GM12878 (cell line): ENCODE measurements at regions of chr1 and their contacts with region 1.

Region 1: DNA sequence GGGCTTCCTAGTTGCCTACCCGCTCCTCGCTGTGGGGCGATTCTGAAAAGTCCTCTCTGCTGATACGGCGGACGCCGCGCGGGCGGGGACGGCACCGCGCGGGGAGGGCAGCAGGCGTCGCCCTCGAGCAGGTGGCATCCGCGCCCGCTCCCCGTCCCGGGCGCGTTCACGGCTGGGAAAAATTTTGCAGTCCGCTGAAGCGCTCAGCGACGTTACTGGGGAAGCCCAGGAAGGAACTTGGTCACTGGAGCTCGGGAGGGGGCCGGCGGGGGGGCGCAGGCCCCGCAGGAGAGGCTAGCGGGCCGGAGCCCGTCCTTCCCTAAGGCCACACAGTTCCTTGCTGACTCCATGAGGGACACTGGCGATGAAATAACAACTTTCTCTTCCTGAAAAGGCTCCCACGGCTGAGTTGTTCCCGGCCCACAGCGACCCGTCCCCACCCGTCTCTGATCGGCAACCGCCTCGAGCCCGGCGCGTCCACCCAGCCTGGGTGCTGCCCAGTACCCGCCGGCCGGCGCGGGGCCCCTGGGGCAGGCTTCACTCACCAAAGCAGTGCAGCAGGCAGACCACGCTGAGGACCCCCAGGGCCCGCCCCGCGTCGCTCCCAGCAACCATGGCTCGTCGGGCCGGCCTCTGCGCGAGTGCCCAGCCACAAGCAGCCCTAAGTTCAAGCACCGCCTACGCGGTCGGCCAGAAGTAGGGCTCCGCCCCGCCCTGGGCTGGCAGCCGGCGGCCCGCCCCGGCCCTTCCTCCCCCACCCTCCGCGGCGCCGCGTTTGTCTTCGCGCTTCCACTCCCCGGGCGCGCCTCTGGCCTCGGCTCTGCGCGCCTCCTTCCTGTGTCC is at the start of gene CD58:
- DNase-seq: no peak
- ATAC-seq: peak; percentile 76
- H3K4me3 ChIP-seq: peak within 1 kb of the TSS; percentile 97
- H3K27ac ChIP-seq: peak within 1 kb of the TSS; percentile 95
- H3K4me1 ChIP-seq: peaks cover 40% of the 10 kb centered on the region
- H3K27me3 ChIP-seq: no peaks in the 10 kb centered on the region
- CTCF ChIP-seq: peak; percentile 69 to 72 (median 70)
- EP300 ChIP-seq: 0 out of 4 replicates have a peak, but pooled peaks have one; percentile 12 to 27
- POLR2A ChIP-seq: peak; percentile 93
- RAD21 ChIP-seq: peak; percentile 32; the same call in 1 of the 2 replicates
- polyA plus RNA-seq, gene CD58: 110 to 125 TPM

Region 2: GRCh38 chr1:116504308-116505156 is 66.0 kb before region 1 on chr1:
- CTCF ChIA-PET with region 1: interaction called, 5 read pairs
- POLR2A ChIA-PET with region 1: interaction called, 9 read pairs
- RAD21 ChIA-PET with region 1: interaction called, 10 read pairs
- SMC1A ChIA-PET with region 1: interaction called, 18 read pairs
- in situ Hi-C with region 1: no loop called
- intact Hi-C with region 1: loop called (anchors 2 kb)
- DNase-seq: peak; percentile 91
- ATAC-seq: peak; percentile 90
- H3K4me3 ChIP-seq: no peak overlapping the region
- H3K27ac ChIP-seq: peak overlapping the region; percentile 84
- H3K4me1 ChIP-seq: peaks cover 54% of the 10 kb centered on the region
- H3K27me3 ChIP-seq: no peaks in the 10 kb centered on the region
- CTCF ChIP-seq: no peak
- EP300 ChIP-seq: peak; percentile 43 to 69; a peak in 1 of 4 replicates
- POLR2A ChIP-seq: no peak
- RAD21 ChIP-seq: 0 out of 2 replicates have a peak, but pooled peaks have one; percentile 19

Region 3: GRCh38 chr1:116544588-116545358 is 25.8 kb before region 1 on chr1:
- CTCF ChIA-PET with region 1: interaction called, 10 read pairs
- POLR2A ChIA-PET with region 1: interaction called, 13 read pairs
- RAD21 ChIA-PET with region 1: interaction called, 20 read pairs
- SMC1A ChIA-PET with region 1: interaction called, 32 read pairs
- in situ Hi-C with region 1: no loop called
- intact Hi-C with region 1: loop called (anchors 2 kb)
- DNase-seq: no peak
- ATAC-seq: peak; percentile 64
- H3K4me3 ChIP-seq: peak overlapping the region; percentile 34
- H3K27ac ChIP-seq: peak overlapping the region; percentile 98
- H3K4me1 ChIP-seq: peaks cover 70% of the 10 kb centered on the region
- H3K27me3 ChIP-seq: no peaks in the 10 kb centered on the region
- CTCF ChIP-seq: no peak
- EP300 ChIP-seq: peak; percentile 73 to 83; a peak in 3 of 4 replicates
- POLR2A ChIP-seq: peak; percentile 50; the same call in 1 of the 2 replicates
- RAD21 ChIP-seq: no peak

Region 4: DNA sequence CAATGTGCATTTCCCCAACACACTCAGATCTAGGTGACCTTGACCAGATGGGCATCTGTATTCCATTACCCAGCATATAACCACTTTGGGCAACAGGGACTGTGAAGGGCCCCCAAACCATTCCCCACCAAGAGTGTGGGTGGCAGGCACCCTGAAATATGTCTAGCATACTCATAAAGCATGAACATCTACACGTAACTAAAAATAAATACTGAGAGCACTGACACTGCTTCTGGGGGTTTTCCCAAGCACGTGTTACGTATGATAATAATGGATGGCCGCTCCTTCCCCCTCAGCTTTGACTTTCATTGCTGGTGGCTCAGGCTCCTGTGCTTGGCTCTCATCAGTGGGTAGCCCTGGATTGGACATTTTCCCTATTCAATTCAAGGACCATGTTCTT is 57.9 kb after region 1 on chr1:
- CTCF ChIA-PET with region 1: interaction called, 12 read pairs
- POLR2A ChIA-PET with region 1: no interaction called
- RAD21 ChIA-PET with region 1: interaction called, 4 read pairs
- SMC1A ChIA-PET with region 1: interaction called, 16 read pairs
- in situ Hi-C with region 1: no loop called
- intact Hi-C with region 1: loop called (anchors 1 kb)
- DNase-seq: peak; percentile 48
- ATAC-seq: no peak; the same call in 2 of the 3 replicates
- H3K4me3 ChIP-seq: no peak overlapping the region
- H3K27ac ChIP-seq: peak overlapping the region; percentile 68
- H3K4me1 ChIP-seq: peaks cover 21% of the 10 kb centered on the region
- H3K27me3 ChIP-seq: no peaks in the 10 kb centered on the region
- CTCF ChIP-seq: no peak
- EP300 ChIP-seq: 0 out of 4 replicates have a peak, but pooled peaks of 1 of the 2 experiments have one; percentile 62
- POLR2A ChIP-seq: peak; percentile 36; the same call in 1 of the 2 replicates
- RAD21 ChIP-seq: 0 out of 2 replicates have a peak, but pooled peaks have one; percentile 0

Region 5: DNA sequence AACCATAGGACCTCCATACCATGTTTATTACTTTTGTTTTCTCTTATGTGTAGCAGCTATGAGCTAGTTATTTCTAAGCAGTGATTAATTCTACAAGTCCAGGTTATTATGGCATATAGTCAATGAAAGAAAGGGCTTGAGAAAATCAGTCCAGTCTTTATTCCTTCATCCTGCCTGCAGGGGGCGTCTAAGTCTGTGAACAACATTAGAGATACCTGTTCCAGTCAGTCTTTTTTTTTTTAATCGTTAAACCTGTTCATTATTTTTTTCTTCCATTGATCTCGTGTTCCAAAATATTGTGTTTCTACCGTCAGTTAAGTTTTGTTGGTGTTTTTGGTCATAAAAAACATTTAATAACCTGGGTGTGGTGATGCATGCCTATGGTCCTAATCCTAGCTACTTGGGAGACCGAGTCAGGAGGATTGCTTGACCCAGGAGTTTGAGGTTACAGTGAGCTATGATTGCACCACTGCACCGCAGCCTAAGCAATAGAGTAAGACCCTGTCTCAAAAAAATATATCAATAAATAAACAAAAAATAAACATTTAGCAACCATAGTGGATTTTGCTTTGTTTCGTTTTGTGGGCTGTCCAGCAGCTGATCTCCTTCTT is 154.3 kb after region 1 on chr1:
- CTCF ChIA-PET with region 1: interaction called, 29 read pairs
- POLR2A ChIA-PET with region 1: no interaction called
- RAD21 ChIA-PET with region 1: interaction called, 11 read pairs
- SMC1A ChIA-PET with region 1: interaction called, 18 read pairs
- in situ Hi-C with region 1: no loop called
- intact Hi-C with region 1: loop called (anchors 5 kb)
- DNase-seq: no peak
- ATAC-seq: peak; percentile 88
- H3K4me3 ChIP-seq: no peak overlapping the region
- H3K27ac ChIP-seq: no peak overlapping the region
- H3K4me1 ChIP-seq: no peaks in the 10 kb centered on the region
- H3K27me3 ChIP-seq: no peaks in the 10 kb centered on the region
- CTCF ChIP-seq: peak; percentile 70 to 78 (median 72)
- EP300 ChIP-seq: no peak
- POLR2A ChIP-seq: no peak
- RAD21 ChIP-seq: peak; percentile 80

Region 6: GRCh38 chr1:116881879-116882520 is 311.4 kb after region 1 on chr1:
- CTCF ChIA-PET with region 1: interaction called, 9 read pairs
- POLR2A ChIA-PET with region 1: no interaction called
- RAD21 ChIA-PET with region 1: interaction called, 7 read pairs
- SMC1A ChIA-PET with region 1: interaction called, 4 read pairs
- in situ Hi-C with region 1: no loop called
- intact Hi-C with region 1: loop called (anchors 2 kb)
- DNase-seq: no peak
- ATAC-seq: peak; percentile 69
- H3K4me3 ChIP-seq: no peak overlapping the region
- H3K27ac ChIP-seq: no peak overlapping the region
- H3K4me1 ChIP-seq: peaks cover 14% of the 10 kb centered on the region; the same call in 1 of the 2 replicates
- H3K27me3 ChIP-seq: no peaks in the 10 kb centered on the region
- CTCF ChIP-seq: peak; percentile 45 to 73 (median 65)
- EP300 ChIP-seq: no peak
- POLR2A ChIP-seq: no peak
- RAD21 ChIP-seq: peak; percentile 79

Region 7: DNA sequence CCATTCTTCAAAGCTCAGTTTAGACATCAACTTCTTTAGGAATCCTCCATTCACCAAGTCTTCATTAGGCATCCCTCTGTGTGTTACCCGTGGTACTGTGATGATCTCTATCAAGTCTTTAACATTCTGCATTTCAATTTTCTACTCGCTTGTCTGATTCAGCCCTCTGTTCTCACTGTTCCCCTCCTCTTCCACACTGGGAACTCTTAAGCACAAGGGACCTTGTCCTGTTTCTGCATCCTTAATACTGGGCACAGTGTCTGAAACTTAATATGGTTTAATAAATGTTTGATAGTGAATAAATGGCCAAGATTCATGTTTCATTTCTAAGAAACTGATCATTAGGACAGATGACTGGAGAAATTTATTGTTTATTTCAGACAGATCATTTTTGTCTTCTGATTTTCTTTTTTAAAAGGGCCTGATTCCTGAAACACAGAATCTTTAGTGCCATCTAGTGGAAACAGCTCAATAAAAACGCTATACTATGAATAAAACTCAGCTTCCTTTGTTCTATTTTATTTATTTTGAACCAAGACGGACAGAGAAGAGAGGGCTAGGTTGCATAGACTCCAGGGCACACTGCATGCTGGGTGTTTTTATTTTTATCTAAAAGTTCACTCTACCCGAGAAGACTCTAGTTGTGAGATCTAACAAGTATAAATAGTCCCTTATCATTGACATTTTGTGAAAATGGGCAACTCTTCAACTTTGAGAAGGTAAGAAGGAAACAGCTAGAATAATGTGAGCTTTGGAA is 557.9 kb after region 1 on chr1:
- CTCF ChIA-PET with region 1: interaction called, 22 read pairs
- POLR2A ChIA-PET with region 1: no interaction called
- RAD21 ChIA-PET with region 1: interaction called, 10 read pairs
- SMC1A ChIA-PET with region 1: interaction called, 7 read pairs
- in situ Hi-C with region 1: no loop called
- intact Hi-C with region 1: loop called (anchors 5 kb)
- DNase-seq: no peak
- ATAC-seq: peak; percentile 79
- H3K4me3 ChIP-seq: no peak overlapping the region
- H3K27ac ChIP-seq: no peak overlapping the region
- H3K4me1 ChIP-seq: no peaks in the 10 kb centered on the region
- H3K27me3 ChIP-seq: peaks cover 0 to 3% of the 10 kb centered on the region in 2 experiments; a peak in 2 of 4 replicates
- CTCF ChIP-seq: peak in 2 of 3 experiments; percentile 47 to 52; a peak in 3 of 6 replicates
- EP300 ChIP-seq: no peak
- POLR2A ChIP-seq: no peak
- RAD21 ChIP-seq: peak; percentile 66